ENCODE measurements at regions of chr5 and their contacts with region 1.

Region 1: GRCh38 chr5:96536991-96537785 is 104.1 kb upstream of the PCSK1 start:
- DNase-seq: peak; percentile 48 to 83 (median 75)
- H3K4me3 ChIP-seq: peak overlapping the region in 1 of 2 donors; percentile 1
- H3K4me3 Mint-ChIP-seq: peak overlapping the region; percentile 18 to 93 (median 76)
- H3K27ac ChIP-seq: peak overlapping the region; percentile 38
- H3K27ac Mint-ChIP-seq: peak overlapping the region; percentile 83 to 100 (median 94)
- H3K4me1 ChIP-seq: peaks cover 30% of the 10 kb centered on the region
- H3K4me1 Mint-ChIP-seq: peaks cover 23 to 41% (median 30%) of the 10 kb centered on the region in 4 donors
- H3K27me3 ChIP-seq: no peaks in the 10 kb centered on the region
- H3K27me3 Mint-ChIP-seq: no peaks in the 10 kb centered on the region

Region 2: GRCh38 chr5:96595300-96596090 is 58.3 kb after region 1 on chr5:
- CTCF ChIA-PET with region 1: interaction called, 3 read pairs
- POLR2A ChIA-PET with region 1: no interaction called
- intact Hi-C with region 1: loop called (anchors 5 kb)
- DNase-seq: peak in 4 of 5 donors; percentile 6 to 32 (median 18)
- H3K4me3 ChIP-seq: no peak overlapping the region
- H3K4me3 Mint-ChIP-seq: no peak overlapping the region
- H3K27ac ChIP-seq: no peak overlapping the region
- H3K27ac Mint-ChIP-seq: no peak overlapping the region
- H3K4me1 ChIP-seq: no peaks in the 10 kb centered on the region
- H3K4me1 Mint-ChIP-seq: no peaks in the 10 kb centered on the region
- H3K27me3 ChIP-seq: no peaks in the 10 kb centered on the region
- H3K27me3 Mint-ChIP-seq: peaks cover 3 to 10% of the 10 kb centered on the region in 2 donors

Region 3: GRCh38 chr5:96816411-96816939 is 279.3 kb after region 1 on chr5:
- CTCF ChIA-PET with region 1: no interaction called
- POLR2A ChIA-PET with region 1: no interaction called
- intact Hi-C with region 1: loop called (anchors 5 kb)
- DNase-seq: peak; percentile 85 to 92 (median 89)
- H3K4me3 ChIP-seq: peak overlapping the region; percentile 24 to 64
- H3K4me3 Mint-ChIP-seq: peak overlapping the region; percentile 80 to 96 (median 90)
- H3K27ac ChIP-seq: peak overlapping the region; percentile 76
- H3K27ac Mint-ChIP-seq: peak overlapping the region; percentile 88 to 99 (median 97)
- H3K4me1 ChIP-seq: peaks cover 56% of the 10 kb centered on the region
- H3K4me1 Mint-ChIP-seq: peaks cover 51 to 76% (median 64%) of the 10 kb centered on the region in 4 donors
- H3K27me3 ChIP-seq: no peaks in the 10 kb centered on the region
- H3K27me3 Mint-ChIP-seq: no peaks in the 10 kb centered on the region

Region 4: DNA sequence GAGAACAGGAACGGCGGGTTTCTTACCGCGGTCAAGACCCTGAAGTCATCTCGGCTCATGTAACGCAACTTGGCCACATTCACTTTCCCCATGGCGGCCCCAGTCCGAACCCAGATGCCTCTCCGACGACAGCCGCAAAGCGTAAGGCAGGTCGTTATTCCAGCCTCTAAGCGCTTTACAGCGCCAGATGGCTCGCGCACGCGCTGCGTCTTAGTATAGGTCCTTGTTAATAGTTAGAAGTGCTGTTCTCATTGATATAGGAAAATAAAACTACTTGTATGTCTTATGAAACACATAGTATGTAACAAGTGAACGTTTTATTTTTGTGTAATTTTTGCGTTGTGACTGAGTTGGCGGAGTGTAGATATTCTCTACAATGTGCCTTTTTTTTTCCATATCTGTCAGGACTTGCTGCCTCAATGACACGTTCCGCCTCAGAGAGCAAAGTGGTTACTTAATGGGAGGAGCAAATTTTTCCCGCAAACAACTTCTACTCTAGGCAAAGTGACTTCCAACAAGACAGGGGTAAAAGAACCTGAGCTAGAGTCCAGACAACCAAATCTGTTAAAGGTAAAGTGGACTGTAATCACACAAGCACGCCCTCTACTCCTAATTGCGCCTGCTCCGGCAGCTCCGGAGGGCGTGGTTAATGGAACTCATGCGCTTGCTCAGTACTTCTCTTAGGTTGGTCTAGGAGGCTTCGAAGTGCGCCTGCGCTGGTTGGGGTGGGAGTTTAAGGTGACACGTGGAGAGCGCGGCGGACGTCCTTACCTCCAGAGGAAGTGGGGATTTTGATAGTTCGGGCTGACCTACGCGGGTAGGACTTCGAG is 646.1 kb after region 1 on chr5 and contains the start of gene RIOK2:
- CTCF ChIA-PET with region 1: no interaction called
- POLR2A ChIA-PET with region 1: no interaction called
- intact Hi-C with region 1: loop called (anchors 5 kb)
- DNase-seq: peak; percentile 91 to 94 (median 92)
- H3K4me3 ChIP-seq: peak within 1 kb of the TSS; percentile 77 to 87
- H3K4me3 Mint-ChIP-seq: peak within 1 kb of the TSS; percentile 94 to 99 (median 97)
- H3K27ac ChIP-seq: peak within 1 kb of the TSS; percentile 95
- H3K27ac Mint-ChIP-seq: peak within 1 kb of the TSS; percentile 99 to 100 (median 100)
- H3K4me1 ChIP-seq: peaks cover 29% of the 10 kb centered on the region
- H3K4me1 Mint-ChIP-seq: peaks cover 23 to 50% (median 38%) of the 10 kb centered on the region in 4 donors
- H3K27me3 ChIP-seq: no peaks in the 10 kb centered on the region
- H3K27me3 Mint-ChIP-seq: no peaks in the 10 kb centered on the region
- total RNA-seq, gene RIOK2: 38.2 to 40.8 TPM